HEK293T (cell line): ENCODE measurements at regions of chr14 and their contacts with region 1.

Region 1: GRCh38 chr14:73728717-73729330 is 14.6 kb upstream of the PNMA1 start:
- DNase-seq: peak; percentile 83

Region 2: DNA sequence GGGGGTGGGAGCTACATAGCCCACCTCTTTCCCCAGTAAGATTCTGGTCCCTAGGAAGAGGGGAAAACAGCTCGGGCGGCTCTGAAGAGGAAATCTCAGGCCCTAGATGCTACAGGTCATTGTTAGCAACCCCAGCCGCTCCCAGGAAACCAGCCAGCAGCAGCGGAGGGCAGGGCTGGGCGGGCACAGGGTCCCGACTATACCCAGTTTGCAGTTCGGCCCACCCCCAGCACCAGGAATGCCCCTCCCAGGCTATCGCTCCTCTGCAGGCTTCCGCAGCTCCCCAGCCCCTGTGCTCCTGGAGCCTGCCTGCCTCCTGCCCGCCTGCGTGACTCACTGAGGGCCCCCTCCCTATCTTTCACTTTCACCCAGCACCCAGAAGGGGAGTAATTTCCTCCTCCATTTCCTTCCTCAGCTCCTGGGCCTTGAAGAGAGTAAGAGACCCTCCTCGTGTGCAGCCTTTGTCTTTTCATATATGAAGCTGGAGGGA is 12.6 kb after region 1 on chr14:
- CTCF ChIA-PET with region 1: interaction called, 10 read pairs
- POLR2A ChIA-PET with region 1: no interaction called
- DNase-seq: no peak

Region 3: GRCh38 chr14:73753959-73754882 is 25.4 kb after region 1 on chr14:
- CTCF ChIA-PET with region 1: interaction called, 14 read pairs
- POLR2A ChIA-PET with region 1: interaction called, 11 read pairs
- DNase-seq: no peak

Region 4: GRCh38 chr14:73759714-73760597 is 31.1 kb after region 1 on chr14:
- CTCF ChIA-PET with region 1: interaction called, 14 read pairs
- POLR2A ChIA-PET with region 1: interaction called, 11 read pairs
- DNase-seq: peak; percentile 88

Region 5: GRCh38 chr14:73825551-73826188 is 96.8 kb after region 1 on chr14:
- CTCF ChIA-PET with region 1: interaction called, 10 read pairs
- POLR2A ChIA-PET with region 1: interaction called, 3 read pairs
- DNase-seq: peak; percentile 84

Region 6: GRCh38 chr14:73851644-73852382 is 123.0 kb after region 1 on chr14 and contains the start of gene PTGR2:
- CTCF ChIA-PET with region 1: interaction called, 3 read pairs
- POLR2A ChIA-PET with region 1: interaction called, 10 read pairs
- DNase-seq: peak; percentile 99